ENCODE measurements at regions of chr3 and their contacts with region 1.

Region 1: DNA sequence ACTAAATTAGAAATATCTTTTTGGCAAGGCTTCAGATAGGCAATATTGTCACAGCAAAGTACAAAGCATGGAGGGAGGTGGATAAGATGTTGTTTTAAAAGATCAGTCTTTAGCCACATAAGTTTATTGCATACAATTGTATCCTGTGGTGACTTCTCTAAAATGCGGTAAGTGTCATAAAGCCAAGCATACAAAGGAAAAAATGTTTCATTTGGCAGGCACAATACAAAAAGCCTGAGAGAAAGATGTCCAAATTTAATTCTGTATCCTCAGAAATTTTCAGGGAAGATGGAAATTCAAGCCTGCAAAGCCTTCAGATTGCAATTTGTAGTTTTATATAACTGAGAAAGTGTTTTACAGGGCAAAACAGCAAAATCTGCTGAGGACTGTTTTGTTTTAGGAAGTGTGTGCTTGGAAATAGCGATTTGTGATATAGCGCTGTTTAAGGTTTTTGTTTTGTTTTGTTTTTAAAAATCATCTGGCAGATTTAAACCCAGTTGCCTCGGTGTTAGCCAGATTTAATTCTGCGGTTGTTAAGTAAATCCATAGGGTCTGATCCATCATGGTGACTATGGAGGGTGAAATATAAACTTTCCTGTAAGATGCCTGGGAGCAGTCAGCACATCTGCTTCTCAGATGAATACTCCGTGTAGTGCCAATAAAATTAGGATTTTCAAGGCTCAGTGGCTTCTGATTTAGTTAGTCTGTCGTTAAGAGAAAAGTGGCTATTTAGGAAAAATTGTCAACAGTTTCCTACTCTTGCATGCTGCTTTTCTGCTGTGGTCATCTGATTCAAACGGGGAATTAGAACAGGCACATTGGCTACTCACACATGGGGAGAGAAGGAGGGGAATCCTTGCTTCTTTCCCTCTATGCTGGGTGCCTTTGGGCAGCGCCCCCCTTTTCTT is 8.0 kb downstream of the KAT2B start:
- DNase-seq: no peak
- ATAC-seq: no peak
- H3K4me3 ChIP-seq: peak overlapping the region in 5 of 12 donors; percentile 7 to 22 (median 16)
- H3K27ac ChIP-seq: peak overlapping the region in 7 of 12 donors; percentile 6 to 58 (median 36)
- H3K4me1 ChIP-seq: peaks cover 0 to 52% (median 32%) of the 10 kb centered on the region in 12 donors
- H3K27me3 ChIP-seq: no peaks in the 10 kb centered on the region
- CTCF ChIP-seq: no peak
- POLR2A ChIP-seq: no peak

Region 2: GRCh38 chr3:19202303-19202702 is 845.9 kb before region 1 on chr3:
- intact Hi-C with region 1: no loop called
- DNase-seq: no peak
- ATAC-seq: no peak
- H3K4me3 ChIP-seq: no peak overlapping the region
- H3K27ac ChIP-seq: no peak overlapping the region
- H3K4me1 ChIP-seq: no peaks in the 10 kb centered on the region
- H3K27me3 ChIP-seq: no peaks in the 10 kb centered on the region
- CTCF ChIP-seq: no peak
- POLR2A ChIP-seq: no peak

Region 3: GRCh38 chr3:20080956-20081554 is 32.8 kb after region 1 on chr3:
- intact Hi-C with region 1: loop called in 4 of 10 experiments (anchors 5 kb)
- DNase-seq: peak; percentile 82 to 93 (median 86)
- ATAC-seq: peak; percentile 99 to 100 (median 100)
- H3K4me3 ChIP-seq: no peak overlapping the region
- H3K27ac ChIP-seq: peak overlapping the region; percentile 6 to 74 (median 54)
- H3K4me1 ChIP-seq: peaks cover 10 to 24% (median 20%) of the 10 kb centered on the region in 12 donors
- H3K27me3 ChIP-seq: no peaks in the 10 kb centered on the region
- CTCF ChIP-seq: no peak
- POLR2A ChIP-seq: no peak